Transverse colon (tissue), 4 donors: ENCODE measurements at regions of chr12 and their contacts with region 1.

Region 1: DNA sequence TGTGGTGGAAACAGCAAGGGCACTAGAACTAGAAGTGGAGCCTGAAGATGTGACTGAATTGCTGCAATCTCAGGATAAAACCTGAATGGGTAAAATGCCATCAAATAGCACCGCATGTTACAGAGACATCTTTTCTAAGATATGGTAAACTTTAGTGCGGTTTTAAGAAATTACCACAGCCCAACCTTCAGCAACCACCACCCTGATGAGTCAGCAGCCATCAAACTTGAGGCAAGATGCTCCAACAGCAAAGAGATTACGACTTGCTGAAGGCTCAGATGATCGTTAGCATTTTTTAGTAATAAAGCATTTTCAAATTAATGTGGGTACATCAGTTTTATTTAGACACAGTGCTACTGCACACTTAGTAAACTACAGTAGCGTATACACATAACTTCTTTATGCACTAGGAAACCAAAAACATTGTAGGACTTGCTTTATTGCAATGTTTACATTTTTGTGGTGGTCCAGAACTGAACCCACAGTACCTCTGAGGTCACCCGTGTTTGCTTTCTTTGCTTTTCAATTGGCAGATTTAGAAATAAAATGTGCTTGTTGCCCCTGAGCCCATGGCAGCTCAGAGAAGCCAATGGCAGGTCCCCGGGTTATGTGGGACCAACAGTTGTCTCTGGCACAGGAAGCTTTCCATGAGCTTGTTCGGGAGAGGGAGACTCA is 15.9 kb downstream of the GOLGA3 start:
- DNase-seq: no peak
- H3K4me3 ChIP-seq: no peak overlapping the region
- H3K27ac ChIP-seq: no peak overlapping the region
- H3K4me1 ChIP-seq: no peaks in the 10 kb centered on the region
- H3K27me3 ChIP-seq: no peaks in the 10 kb centered on the region
- CTCF ChIP-seq: no peak
- EP300 ChIP-seq: no peak
- POLR2A ChIP-seq: no peak

Region 2: GRCh38 chr12:132649206-132649934 is 163.4 kb before region 1 on chr12:
- in situ Hi-C with region 1: no loop called
- intact Hi-C with region 1: no loop called
- DNase-seq: peak; percentile 31
- H3K4me3 ChIP-seq: no peak overlapping the region
- H3K27ac ChIP-seq: peak overlapping the region in 1 of 4 donors; percentile 57
- H3K4me1 ChIP-seq: peaks cover 0 to 9% (median 2%) of the 10 kb centered on the region in 4 donors
- H3K27me3 ChIP-seq: no peaks in the 10 kb centered on the region
- CTCF ChIP-seq: no peak
- EP300 ChIP-seq: no peak
- POLR2A ChIP-seq: no peak

Region 3: DNA sequence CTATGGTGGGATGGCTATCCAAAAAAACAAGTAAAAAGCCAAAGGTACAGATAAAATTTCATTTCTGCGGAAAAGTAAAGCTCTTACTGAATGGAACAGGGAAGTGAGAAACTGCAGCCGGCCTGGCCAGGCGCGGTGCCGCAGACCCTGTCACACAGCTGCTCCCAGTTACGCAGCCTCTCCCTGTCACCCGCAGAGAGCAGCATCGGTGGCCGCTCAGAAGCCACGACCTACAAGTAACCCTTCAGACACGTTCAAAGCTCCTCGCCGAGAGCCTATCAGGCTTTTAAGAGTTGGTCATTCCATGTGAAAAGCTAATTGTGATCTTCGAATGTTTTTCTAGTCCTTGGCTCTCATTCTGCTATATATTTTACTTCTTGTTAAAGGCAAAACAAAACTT is 40.2 kb before region 1 on chr12:
- in situ Hi-C with region 1: no loop called
- intact Hi-C with region 1: loop called (anchors 2 kb)
- DNase-seq: peak; percentile 56
- H3K4me3 ChIP-seq: no peak overlapping the region
- H3K27ac ChIP-seq: peak overlapping the region in 2 of 4 donors; percentile 3 to 74
- H3K4me1 ChIP-seq: peaks cover 0 to 19% (median 8%) of the 10 kb centered on the region in 4 donors
- H3K27me3 ChIP-seq: no peaks in the 10 kb centered on the region
- CTCF ChIP-seq: no peak
- EP300 ChIP-seq: no peak
- POLR2A ChIP-seq: no peak